Posterior vena cava (tissue), 2 donors: ENCODE measurements at regions of chr12 and their contacts with region 1.

Region 1: DNA sequence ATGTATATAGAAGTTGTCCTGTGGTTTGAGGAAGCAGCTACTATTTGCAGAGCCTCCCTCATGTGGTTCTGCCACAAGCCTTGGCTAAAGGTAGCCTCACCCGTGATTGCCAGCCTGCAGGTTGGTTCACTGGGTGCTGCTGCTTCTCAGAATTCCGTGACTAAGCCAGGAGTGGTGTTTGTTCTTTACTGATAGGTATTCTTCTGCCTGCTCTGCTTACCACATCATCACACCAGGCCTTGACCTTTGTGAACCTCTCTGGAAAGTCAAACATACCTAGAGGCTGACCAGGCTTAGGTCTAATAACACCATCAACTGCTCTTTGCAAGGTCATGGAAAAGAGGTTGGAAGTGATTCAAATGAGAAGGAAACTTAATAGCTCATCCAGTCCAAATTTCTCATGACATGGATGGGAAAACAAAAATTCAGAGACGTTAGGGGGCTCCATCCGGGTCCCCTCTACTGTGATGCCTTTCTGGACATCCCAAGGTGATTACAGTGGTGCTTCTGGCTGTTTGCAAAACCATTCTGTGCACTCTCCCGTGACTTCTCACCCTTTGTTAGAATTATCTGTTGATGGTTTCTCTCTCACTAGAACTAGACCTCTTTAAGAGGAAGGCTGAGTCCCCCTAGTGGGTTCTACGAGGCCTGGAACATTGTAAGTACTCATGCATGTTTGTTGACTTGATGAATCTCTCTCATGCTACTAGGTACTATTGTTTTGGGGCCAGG is 8.5 kb upstream of the SOCS2 start:
- DNase-seq: no peak

Region 2: DNA sequence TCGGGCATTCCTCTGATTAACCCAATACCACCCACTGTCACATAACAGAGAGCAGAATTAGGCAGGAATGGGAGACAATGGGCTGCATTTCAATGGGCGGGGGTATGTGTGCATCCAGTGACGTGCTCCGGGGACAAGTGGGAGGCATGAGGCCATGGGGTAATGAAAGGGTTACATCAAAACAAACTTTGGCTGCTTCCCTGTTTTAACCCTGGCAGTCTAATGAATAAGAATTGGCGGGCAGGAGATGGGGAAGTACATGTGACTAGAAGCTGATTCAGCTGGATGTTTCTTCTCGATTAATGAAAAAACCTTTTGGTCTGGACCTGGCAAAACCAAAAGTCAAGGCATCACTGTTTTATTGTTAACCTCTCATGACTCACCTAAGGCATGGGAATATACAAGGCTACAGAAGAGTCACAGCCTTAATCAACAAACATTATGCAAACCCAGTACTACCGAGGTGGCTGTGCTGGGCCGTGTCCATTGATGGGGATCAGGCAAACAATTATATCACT is 52.7 kb after region 1 on chr12:
- intact Hi-C with region 1: no loop called
- DNase-seq: no peak

Region 3: DNA sequence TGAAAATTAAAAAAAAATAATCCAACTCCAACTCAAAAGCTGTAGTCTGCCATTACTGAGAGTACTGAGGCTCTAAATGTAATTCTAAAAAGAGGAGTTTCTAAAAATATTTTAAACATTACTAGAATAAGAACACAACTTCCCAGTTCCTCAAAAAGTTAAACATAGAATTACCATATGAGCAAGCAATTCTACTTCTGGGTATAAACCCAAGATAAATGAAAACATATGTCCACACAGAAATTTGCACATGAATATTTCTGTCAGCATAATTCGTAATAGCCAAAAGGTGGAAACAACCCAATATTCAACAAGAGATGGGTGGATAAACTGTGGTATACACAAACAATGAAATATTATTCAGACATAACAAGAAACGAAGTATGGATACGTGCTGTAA is 1524.4 kb after region 1 on chr12:
- intact Hi-C with region 1: loop called in 1 of 2 experiments (anchors 5 kb)
- DNase-seq: no peak